ENCODE measurements at regions of chr4 and their contacts with region 1.

Region 1: GRCh38 chr4:105725623-105726022 is 17.0 kb downstream of the GSTCD start:
- DNase-seq: no peak
- H3K4me3 ChIP-seq: no peak overlapping the region
- H3K27ac ChIP-seq: no peak overlapping the region
- H3K4me1 ChIP-seq: no peaks in the 10 kb centered on the region
- H3K27me3 ChIP-seq: no peaks in the 10 kb centered on the region
- CTCF ChIP-seq: no peak

Region 2: GRCh38 chr4:105710676-105711075 is 14.9 kb before region 1 on chr4:
- CTCF ChIA-PET with region 1: interaction called, 14 read pairs
- POLR2A ChIA-PET with region 1: no interaction called
- intact Hi-C with region 1: no loop called
- DNase-seq: no peak
- H3K4me3 ChIP-seq: no peak overlapping the region
- H3K27ac ChIP-seq: no peak overlapping the region
- H3K4me1 ChIP-seq: peaks cover 7% of the 10 kb centered on the region; the same call in 1 of the 2 replicates
- H3K27me3 ChIP-seq: no peaks in the 10 kb centered on the region
- CTCF ChIP-seq: no peak

Measured in PC-9 (cell line).